Gastrocnemius medialis (tissue), 4 donors: ENCODE measurements at regions of chr14 and their contacts with region 1.

Region 1: GRCh38 chr14:25049568-25050268 is at the start of gene STXBP6:
- DNase-seq: peak in 1 of 2 donors; percentile 34
- ATAC-seq: peak; percentile 61 to 62
- H3K4me3 ChIP-seq: peak within 1 kb of the TSS; percentile 61 to 71 (median 66)
- H3K27ac ChIP-seq: peak within 1 kb of the TSS; percentile 58 to 73 (median 68)
- H3K4me1 ChIP-seq: peaks cover 0 to 15% of the 10 kb centered on the region in 2 donors
- H3K27me3 ChIP-seq: peaks cover 0 to 3% (median 2%) of the 10 kb centered on the region in 3 donors
- CTCF ChIP-seq: no peak
- POLR2A ChIP-seq: peak; percentile 22 to 34
- total RNA-seq, gene STXBP6: 2.6 to 5.5 (median 4.4) TPM

Region 2: DNA sequence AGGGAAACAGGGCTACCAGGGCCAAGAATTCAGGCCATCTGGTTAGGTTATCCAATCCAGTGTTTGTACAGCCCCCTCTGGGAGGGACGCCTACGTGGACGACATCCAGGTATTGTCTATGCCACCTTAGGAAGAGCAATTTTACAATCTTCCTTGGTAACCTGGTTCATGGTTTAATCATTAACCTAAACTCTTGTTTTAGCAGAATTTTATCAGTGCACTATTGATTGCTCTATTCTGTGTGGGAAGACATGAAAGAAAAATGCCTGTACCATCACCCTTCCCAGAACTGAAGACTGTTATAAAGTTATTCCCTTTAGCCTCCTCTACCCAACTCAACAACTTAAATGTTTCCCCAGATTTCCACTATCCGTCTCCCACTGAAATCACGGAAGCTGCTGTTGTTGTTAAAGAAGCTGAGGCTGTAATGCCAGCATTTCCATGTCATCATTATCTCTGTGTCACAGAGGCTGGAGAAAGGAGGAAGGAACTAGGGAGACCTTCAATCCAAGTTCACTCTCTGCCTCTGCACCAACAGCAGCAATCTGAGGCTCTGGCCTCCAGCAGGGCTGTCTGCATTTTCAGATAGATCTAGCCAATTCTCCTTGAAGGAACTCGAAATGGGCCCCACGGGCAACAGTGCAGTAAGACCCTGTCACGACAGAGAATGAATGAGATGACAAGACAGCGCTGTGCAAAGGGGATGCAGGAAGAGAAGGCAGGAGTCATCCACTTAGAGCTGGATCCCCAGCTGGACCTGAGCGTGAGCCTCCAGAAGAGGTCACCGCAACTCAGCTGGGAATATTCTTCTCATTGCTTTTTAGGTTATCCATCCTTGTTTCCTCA is 232.3 kb before region 1 on chr14:
- in situ Hi-C with region 1: loop called in 1 of 4 experiments (anchors 10 kb)
- intact Hi-C with region 1: no loop called
- DNase-seq: no peak
- ATAC-seq: no peak
- H3K4me3 ChIP-seq: no peak overlapping the region
- H3K27ac ChIP-seq: peak overlapping the region in 2 of 4 donors; percentile 37 to 38
- H3K4me1 ChIP-seq: no peaks in the 10 kb centered on the region
- H3K27me3 ChIP-seq: no peaks in the 10 kb centered on the region
- CTCF ChIP-seq: no peak
- POLR2A ChIP-seq: no peak

Region 3: DNA sequence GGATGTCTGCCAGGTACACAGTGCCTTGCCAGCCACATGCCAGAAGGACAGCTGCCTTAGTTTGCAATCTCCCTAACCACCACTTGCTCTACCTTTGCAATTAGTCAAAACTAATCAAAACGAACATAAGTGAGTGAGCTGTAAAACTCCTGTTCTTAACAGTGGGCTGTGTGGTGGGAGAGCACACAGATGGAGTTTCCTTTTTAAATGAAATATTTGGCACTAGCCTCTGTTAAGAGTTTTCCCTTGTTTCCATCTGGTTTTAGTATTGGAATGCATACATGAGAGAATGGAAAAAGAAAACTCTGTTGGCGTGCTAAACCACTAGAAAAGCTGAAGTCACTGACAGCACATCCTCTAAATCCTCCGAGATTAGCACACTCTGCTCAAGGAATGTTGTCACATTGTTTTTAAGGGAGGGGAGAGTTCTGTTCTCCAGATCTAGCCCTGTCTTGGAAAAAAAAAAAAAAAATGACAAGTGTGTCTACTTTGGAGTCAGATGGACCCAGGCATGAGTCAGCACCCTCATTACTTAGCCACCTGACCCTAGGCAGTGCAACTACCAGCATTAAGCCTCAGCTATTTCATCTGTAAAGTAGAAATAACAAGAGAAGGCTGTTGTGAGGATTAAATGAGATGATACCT is 83.7 kb before region 1 on chr14:
- in situ Hi-C with region 1: no loop called
- intact Hi-C with region 1: loop called (anchors 5 kb)
- DNase-seq: peak; percentile 16 to 49
- ATAC-seq: peak; percentile 88 to 89
- H3K4me3 ChIP-seq: no peak overlapping the region
- H3K27ac ChIP-seq: peak overlapping the region; percentile 38 to 66 (median 58)
- H3K4me1 ChIP-seq: peaks cover 6 to 22% of the 10 kb centered on the region in 2 donors
- H3K27me3 ChIP-seq: no peaks in the 10 kb centered on the region
- CTCF ChIP-seq: no peak
- POLR2A ChIP-seq: no peak

Region 4: GRCh38 chr14:25231004-25231403 is 181.3 kb after region 1 on chr14:
- in situ Hi-C with region 1: no loop called
- intact Hi-C with region 1: no loop called
- DNase-seq: no peak
- ATAC-seq: no peak
- H3K4me3 ChIP-seq: no peak overlapping the region
- H3K27ac ChIP-seq: no peak overlapping the region
- H3K4me1 ChIP-seq: no peaks in the 10 kb centered on the region
- H3K27me3 ChIP-seq: no peaks in the 10 kb centered on the region
- CTCF ChIP-seq: no peak
- POLR2A ChIP-seq: no peak